Sciatic nerve (tissue), 2 donors: ENCODE measurements at regions of chr20 and their contacts with region 1.

Region 1: GRCh38 chr20:34312544-34313217 is 9.5 kb upstream of the AHCY start:
- DNase-seq: peak; percentile 91
- ATAC-seq: peak; percentile 97

Region 2: GRCh38 chr20:34473262-34473883 is 160.7 kb after region 1 on chr20:
- intact Hi-C with region 1: loop called (anchors 10 kb)
- DNase-seq: no peak
- ATAC-seq: peak; percentile 75

Region 3: GRCh38 chr20:34709831-34710567 is 397.3 kb after region 1 on chr20:
- intact Hi-C with region 1: loop called (anchors 10 kb)
- DNase-seq: peak; percentile 70
- ATAC-seq: peak; percentile 77

Region 4: GRCh38 chr20:35232575-35232974 is 919.9 kb after region 1 on chr20:
- intact Hi-C with region 1: no loop called
- DNase-seq: no peak
- ATAC-seq: no peak